ENCODE measurements at regions of chr3 and their contacts with region 1.

Region 1: GRCh38 chr3:48439820-48440589 is at the starts of genes CCDC51 and TMA7:
- DNase-seq: peak; percentile 99
- ATAC-seq: peak; percentile 98
- total RNA-seq, gene CCDC51: 13.3 TPM
- total RNA-seq, gene TMA7: 262 TPM

Region 2: GRCh38 chr3:48273594-48274211 is 166.3 kb before region 1 on chr3:
- intact Hi-C with region 1: loop called (anchors 10 kb)
- DNase-seq: no peak
- ATAC-seq: peak; percentile 72

Region 3: DNA sequence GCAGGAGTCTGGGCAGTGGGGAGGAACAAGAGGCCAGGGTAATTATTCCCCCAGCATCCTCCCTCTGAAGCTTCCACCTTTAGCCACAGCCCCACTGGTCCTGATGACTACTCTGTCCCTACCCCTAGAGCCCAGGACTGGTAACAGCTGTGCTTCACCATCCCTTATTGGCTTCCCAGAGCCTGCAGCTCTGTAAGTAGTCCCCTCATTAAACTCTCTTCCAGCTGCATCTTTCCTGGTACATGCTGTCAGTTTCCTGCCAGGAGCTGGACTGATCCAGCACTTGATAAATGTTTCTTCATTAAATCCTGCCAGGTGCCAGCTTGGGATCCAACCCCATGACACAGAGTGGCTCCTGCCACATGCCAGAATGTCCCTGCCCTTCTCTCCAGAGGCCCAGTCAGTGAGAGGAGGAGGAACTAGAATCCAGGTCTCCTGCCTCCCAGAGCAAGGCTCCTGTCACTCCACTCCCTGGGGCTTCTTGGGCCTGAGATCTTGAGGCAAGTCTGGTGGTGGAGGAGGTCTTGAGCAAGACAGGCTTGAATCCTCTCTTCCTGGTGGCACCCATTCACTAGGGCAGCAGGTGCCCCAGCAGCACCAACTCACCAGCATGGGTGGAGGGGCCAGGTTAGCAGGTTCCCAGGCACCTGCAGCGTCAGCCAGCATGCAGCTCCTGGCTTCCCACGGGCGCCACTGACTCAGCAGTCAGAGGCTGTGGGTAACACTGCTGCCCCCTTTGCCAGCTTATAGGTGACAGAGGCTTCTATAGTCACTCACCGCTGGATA is 40.4 kb before region 1 on chr3:
- intact Hi-C with region 1: loop called (anchors 5 kb)
- DNase-seq: no peak
- ATAC-seq: no peak